ENCODE measurements at regions of chr18 and their contacts with region 1.

Region 1: DNA sequence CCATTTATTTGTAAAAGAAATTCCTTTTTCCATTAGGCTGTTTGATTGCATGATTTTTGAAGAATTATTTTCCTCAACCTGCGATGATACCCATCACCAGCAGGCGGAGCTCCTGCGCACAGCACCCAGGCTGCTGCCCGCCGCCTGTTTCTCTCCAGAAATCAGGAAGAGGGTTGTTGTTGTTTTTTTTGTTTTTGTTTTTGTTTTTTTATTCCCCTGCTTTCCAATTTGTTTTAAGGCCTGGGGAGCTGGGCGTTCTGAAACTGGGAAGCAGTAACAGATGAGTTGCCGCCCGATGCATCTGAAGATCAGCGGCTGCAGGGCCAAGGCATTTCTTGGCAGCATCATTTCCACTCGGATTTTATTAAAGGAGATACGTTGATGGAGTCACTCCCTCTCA is 132.1 kb downstream of the MBP start:
- DNase-seq: peak; percentile 24 to 71 (median 52)
- ATAC-seq: peak; percentile 66
- H3K4me3 ChIP-seq: no peak overlapping the region
- H3K4me3 Mint-ChIP-seq: no peak overlapping the region
- H3K27ac ChIP-seq: no peak overlapping the region
- H3K27ac Mint-ChIP-seq: no peak overlapping the region
- H3K4me1 ChIP-seq: peaks cover 19% of the 10 kb centered on the region
- H3K4me1 Mint-ChIP-seq: peaks cover 27% of the 10 kb centered on the region
- H3K27me3 ChIP-seq: no peaks in the 10 kb centered on the region
- H3K27me3 Mint-ChIP-seq: no peaks in the 10 kb centered on the region
- CTCF ChIP-seq: peak; percentile 97

Region 2: DNA sequence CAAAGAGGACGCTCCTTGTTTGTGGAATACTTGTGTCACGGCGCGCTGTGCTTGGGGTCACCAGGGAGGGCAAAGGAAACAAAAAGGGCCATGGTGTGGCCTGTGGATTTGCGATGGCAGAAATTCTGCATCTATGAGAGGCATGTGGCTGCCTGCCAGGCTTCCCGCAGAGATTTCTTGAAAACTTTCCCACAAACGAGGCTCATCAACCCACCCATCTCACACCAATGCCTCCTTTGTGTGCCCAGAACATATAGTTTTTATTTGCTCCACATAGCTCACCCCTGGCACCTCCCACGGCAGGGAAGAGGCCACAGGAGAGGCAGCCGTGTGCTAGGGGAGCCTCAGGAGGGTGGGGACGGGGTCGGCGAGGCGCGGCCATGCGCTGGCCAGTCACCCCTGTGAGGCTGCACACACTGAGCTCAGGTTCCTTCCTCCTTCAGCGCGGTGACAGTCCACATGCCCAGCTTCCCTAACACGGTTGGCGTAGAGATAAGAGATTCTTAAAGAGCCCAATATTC is 31.7 kb after region 1 on chr18:
- CTCF ChIA-PET with region 1: interaction called, 21 read pairs
- POLR2A ChIA-PET with region 1: no interaction called
- intact Hi-C with region 1: no loop called
- DNase-seq: no peak
- ATAC-seq: no peak
- H3K4me3 ChIP-seq: no peak overlapping the region
- H3K4me3 Mint-ChIP-seq: no peak overlapping the region
- H3K27ac ChIP-seq: peak overlapping the region in 1 of 2 experiments; percentile 53
- H3K27ac Mint-ChIP-seq: peak overlapping the region; percentile 57
- H3K4me1 ChIP-seq: peaks cover 11% of the 10 kb centered on the region
- H3K4me1 Mint-ChIP-seq: peaks cover 48% of the 10 kb centered on the region
- H3K27me3 ChIP-seq: no peaks in the 10 kb centered on the region
- H3K27me3 Mint-ChIP-seq: no peaks in the 10 kb centered on the region
- CTCF ChIP-seq: no peak

Region 3: GRCh38 chr18:77061946-77062517 is 61.5 kb after region 1 on chr18:
- CTCF ChIA-PET with region 1: interaction called, 20 read pairs
- POLR2A ChIA-PET with region 1: interaction called, 4 read pairs
- intact Hi-C with region 1: no loop called
- DNase-seq: peak in 4 of 9 experiments; percentile 38 to 71 (median 51)
- ATAC-seq: peak; percentile 6
- H3K4me3 ChIP-seq: peak overlapping the region in 1 of 2 experiments; percentile 9
- H3K4me3 Mint-ChIP-seq: peak overlapping the region; percentile 33
- H3K27ac ChIP-seq: peak overlapping the region; percentile 80 to 86
- H3K27ac Mint-ChIP-seq: peak overlapping the region; percentile 99
- H3K4me1 ChIP-seq: peaks cover 80% of the 10 kb centered on the region
- H3K4me1 Mint-ChIP-seq: peaks cover 83% of the 10 kb centered on the region
- H3K27me3 ChIP-seq: no peaks in the 10 kb centered on the region
- H3K27me3 Mint-ChIP-seq: no peaks in the 10 kb centered on the region
- CTCF ChIP-seq: no peak

Region 4: DNA sequence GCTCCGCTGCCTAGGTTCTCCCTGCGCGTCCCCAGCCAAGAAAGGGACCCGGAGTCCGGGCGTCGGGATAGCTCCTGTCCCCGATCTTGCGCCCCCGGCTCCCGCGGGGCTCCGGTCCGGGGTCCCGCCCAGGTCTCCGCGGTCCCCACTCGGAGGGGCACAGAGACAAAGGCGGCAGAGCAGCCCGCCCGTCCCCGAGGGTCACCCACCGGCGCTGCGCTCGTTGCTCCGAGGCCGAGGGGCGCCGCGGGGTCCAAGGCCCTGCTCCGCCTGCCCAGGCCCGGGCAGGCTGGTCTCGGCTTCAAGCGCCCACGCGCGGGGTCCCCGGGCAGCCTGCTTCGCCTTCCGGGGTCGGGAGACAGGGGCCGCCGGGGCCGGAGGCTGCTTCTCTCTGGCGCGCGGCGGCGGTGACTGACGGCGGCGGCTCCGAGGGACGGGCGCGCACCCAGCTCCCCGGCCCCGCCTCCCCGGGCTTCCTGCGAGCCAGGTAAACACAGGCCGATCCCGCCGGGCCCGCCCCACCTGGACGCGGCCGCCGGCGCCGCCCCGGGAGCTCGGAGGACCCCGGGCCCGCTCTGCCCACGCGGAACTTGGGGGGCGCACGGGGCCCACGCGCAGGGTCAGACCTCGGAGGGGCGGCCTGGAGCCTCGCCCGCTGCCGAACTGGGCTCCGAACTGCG is 132.0 kb after region 1 on chr18 and contains the start of gene MBP:
- CTCF ChIA-PET with region 1: interaction called, 8 read pairs
- POLR2A ChIA-PET with region 1: no interaction called
- intact Hi-C with region 1: loop called (anchors 5 kb)
- DNase-seq: peak; percentile 40 to 85 (median 75)
- ATAC-seq: peak; percentile 58
- H3K4me3 ChIP-seq: peak within 1 kb of the TSS; percentile 70 to 76
- H3K4me3 Mint-ChIP-seq: peak within 1 kb of the TSS; percentile 95
- H3K27ac ChIP-seq: peak within 1 kb of the TSS; percentile 69 to 80
- H3K27ac Mint-ChIP-seq: peak within 1 kb of the TSS; percentile 95
- H3K4me1 ChIP-seq: peaks cover 52% of the 10 kb centered on the region
- H3K4me1 Mint-ChIP-seq: peaks cover 57% of the 10 kb centered on the region
- H3K27me3 ChIP-seq: no peaks in the 10 kb centered on the region
- H3K27me3 Mint-ChIP-seq: no peaks in the 10 kb centered on the region
- CTCF ChIP-seq: no peak
- total RNA-seq, gene MBP: 67.9 to 70.7 TPM

Region 5: GRCh38 chr18:77469131-77469530 is 468.6 kb after region 1 on chr18:
- CTCF ChIA-PET with region 1: no interaction called
- POLR2A ChIA-PET with region 1: no interaction called
- intact Hi-C with region 1: loop called (anchors 2 to 5 kb)
- DNase-seq: no peak
- ATAC-seq: no peak
- H3K4me3 ChIP-seq: no peak overlapping the region
- H3K4me3 Mint-ChIP-seq: no peak overlapping the region
- H3K27ac ChIP-seq: no peak overlapping the region
- H3K27ac Mint-ChIP-seq: no peak overlapping the region
- H3K4me1 ChIP-seq: no peaks in the 10 kb centered on the region
- H3K4me1 Mint-ChIP-seq: no peaks in the 10 kb centered on the region
- H3K27me3 ChIP-seq: no peaks in the 10 kb centered on the region
- H3K27me3 Mint-ChIP-seq: peaks cover 33% of the 10 kb centered on the region
- CTCF ChIP-seq: no peak